ENCODE measurements at regions of chr5 and their contacts with region 1.

Region 1: DNA sequence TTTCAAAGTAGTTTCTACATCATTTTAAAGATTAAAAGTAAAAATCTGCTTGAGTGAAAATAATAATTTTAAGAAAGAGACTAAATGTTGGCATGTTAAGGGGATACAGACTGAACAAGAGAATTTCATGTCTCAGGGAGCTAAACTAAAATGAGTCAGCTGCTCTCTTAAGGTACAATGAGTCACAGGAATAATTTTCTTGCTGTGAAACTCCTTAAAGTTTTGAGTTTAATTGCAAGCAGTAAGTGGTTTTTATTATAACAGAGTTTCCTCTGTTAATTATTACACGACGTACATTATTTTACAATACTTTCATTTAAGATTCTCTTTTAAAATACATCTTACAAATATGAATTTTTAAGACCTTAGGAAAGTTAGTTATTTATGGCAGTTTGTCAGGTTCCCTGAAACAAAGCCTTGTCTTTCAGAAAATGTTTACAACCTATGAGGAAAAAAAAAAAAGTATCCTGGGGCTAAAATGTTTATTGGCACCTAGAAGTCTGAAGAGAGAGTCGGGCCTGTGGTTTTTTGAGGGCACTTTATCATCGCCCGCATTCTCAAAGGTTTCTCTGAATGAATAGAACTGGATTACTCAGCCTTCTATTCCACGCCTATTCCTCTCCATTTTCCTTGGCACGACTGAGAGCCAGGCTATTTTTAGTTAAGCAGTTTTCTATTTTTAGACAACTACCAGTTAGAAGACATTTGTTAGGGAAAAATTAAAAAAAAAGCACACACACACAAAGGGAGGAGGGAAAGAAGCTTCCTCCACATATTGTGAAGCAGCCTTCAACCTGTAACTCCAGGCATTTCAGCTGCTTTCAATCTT is 97.4 kb downstream of the MEF2C start:
- DNase-seq: peak in 1 of 2 donors; percentile 44
- H3K4me3 ChIP-seq: peak overlapping the region; percentile 2 to 6
- H3K27ac ChIP-seq: peak overlapping the region; percentile 37 to 59
- H3K4me1 ChIP-seq: peaks cover 0 to 47% (median 16%) of the 10 kb centered on the region in 4 donors
- H3K27me3 ChIP-seq: no peaks in the 10 kb centered on the region
- CTCF ChIP-seq: peak in 1 of 2 experiments; percentile 9

Region 2: DNA sequence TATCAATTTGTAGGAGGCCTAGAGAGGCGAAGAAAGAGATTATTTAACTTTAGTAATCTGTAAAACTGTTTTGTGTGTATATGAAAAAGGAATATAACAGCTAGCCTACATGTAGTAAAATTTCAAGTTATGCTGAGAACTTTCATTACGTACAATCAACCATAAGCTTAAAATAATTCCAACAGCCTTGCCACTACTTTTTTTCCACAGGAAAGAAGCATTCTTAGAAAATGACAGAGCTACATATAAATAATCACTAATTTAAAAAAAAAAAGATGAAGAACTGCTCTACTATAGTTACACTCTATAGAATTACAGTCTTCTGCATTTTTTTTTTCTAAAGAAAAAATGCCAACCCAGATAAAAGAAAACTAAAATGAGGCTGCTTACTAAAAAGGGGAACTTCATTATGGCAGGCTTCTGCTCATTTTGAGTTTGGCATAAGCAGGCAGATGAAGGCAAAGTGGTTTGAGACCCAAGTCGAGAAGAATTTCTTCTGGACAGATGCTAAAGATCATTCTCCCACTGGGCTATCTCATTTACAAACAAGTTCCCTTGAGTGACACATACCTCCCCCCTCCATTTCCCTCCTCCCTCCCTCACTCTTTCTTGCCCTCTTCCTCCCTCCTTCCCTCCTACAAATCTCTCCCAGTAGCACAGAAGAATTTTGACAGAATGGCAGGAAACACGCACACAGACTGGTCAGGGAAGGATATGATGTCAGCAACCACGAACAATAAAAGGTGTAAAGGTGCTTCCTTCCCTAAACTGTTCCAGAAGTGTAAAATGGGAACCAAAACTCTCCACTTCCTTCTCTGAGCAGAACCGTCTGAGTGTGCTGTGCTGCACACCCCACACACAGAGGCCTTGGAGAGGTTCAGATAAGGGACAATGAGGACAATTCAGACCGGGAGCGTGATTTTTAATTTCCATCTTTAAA is 41.3 kb after region 1 on chr5:
- intact Hi-C with region 1: loop called (anchors 5 kb)
- DNase-seq: peak in 1 of 2 donors; percentile 37
- H3K4me3 ChIP-seq: peak overlapping the region in 1 of 2 donors; percentile 30
- H3K27ac ChIP-seq: peak overlapping the region; percentile 70 to 73
- H3K4me1 ChIP-seq: peaks cover 0 to 89% (median 18%) of the 10 kb centered on the region in 4 donors
- H3K27me3 ChIP-seq: no peaks in the 10 kb centered on the region
- CTCF ChIP-seq: no peak

Region 3: GRCh38 chr5:88889189-88890069 is 103.8 kb after region 1 on chr5:
- intact Hi-C with region 1: loop called (anchors 5 kb)
- DNase-seq: peak; percentile 73 to 88
- H3K4me3 ChIP-seq: peak overlapping the region; percentile 67 to 71
- H3K27ac ChIP-seq: peak overlapping the region; percentile 93 to 97
- H3K4me1 ChIP-seq: peaks cover 0 to 56% (median 14%) of the 10 kb centered on the region in 4 donors
- H3K27me3 ChIP-seq: no peaks in the 10 kb centered on the region
- CTCF ChIP-seq: no peak

Measured in tibial artery (tissue), 4 donors.